ENCODE measurements at regions of chr7 and their contacts with region 1.

Region 1: GRCh38 chr7:90455163-90456030 is 14.0 kb upstream of the PTTG1IP2 start:
- DNase-seq: peak; percentile 57
- ATAC-seq: peak; percentile 89
- H3K4me3 ChIP-seq: peak overlapping the region; percentile 23; the same call in 1 of the 2 replicates
- H3K27ac ChIP-seq: no peak overlapping the region
- H3K4me1 ChIP-seq: no peaks in the 10 kb centered on the region
- H3K27me3 ChIP-seq: no peaks in the 10 kb centered on the region
- CTCF ChIP-seq: peak; percentile 70
- POLR2A ChIP-seq: no peak
- RAD21 ChIP-seq: peak; percentile 72

Region 2: GRCh38 chr7:90552521-90552920 is 97.1 kb after region 1 on chr7:
- CTCF ChIA-PET with region 1: no interaction called
- POLR2A ChIA-PET with region 1: no interaction called
- dilution Hi-C with region 1: no loop called
- in situ Hi-C with region 1: no loop called
- intact Hi-C with region 1: no loop called
- DNase-seq: peak; percentile 35
- ATAC-seq: 0 out of 2 replicates have a peak, but pooled peaks have one; percentile 59
- H3K4me3 ChIP-seq: no peak overlapping the region
- H3K27ac ChIP-seq: no peak overlapping the region
- H3K4me1 ChIP-seq: peaks cover 2% of the 10 kb centered on the region; the same call in 1 of the 2 replicates
- H3K27me3 ChIP-seq: peaks cover 4% of the 10 kb centered on the region; the same call in 1 of the 2 replicates
- CTCF ChIP-seq: peak; percentile 42
- POLR2A ChIP-seq: no peak
- RAD21 ChIP-seq: peak; percentile 46

Region 3: DNA sequence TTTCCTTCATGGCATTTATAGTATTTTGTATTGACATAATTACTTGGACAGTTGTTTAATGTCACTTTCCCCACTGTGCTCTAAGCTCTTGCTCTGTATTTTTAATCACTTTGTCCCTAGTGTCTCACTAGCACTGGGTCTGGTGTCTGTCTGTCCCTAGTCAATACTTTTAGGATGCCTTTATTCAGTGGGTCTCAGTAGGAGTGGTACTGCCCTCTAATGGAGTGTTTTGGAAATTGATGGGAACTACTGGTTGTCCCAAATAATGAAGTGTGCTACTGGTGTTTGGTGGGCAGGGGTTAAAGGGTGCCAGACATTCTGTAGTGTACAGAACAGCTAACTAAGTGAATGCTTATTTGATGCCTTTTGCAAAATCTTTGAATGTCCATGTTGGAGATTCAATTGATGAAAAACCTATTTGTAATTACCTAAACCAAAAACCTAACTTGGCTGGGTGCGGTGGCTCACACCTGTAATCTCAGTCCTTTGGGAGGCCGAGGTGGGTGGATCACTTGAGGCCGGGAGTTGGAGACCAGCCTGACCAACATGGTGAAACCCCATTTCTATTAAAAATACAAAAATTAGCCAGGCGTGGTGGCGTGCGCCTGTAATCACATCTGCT is 174.0 kb after region 1 on chr7:
- CTCF ChIA-PET with region 1: no interaction called
- POLR2A ChIA-PET with region 1: no interaction called
- dilution Hi-C with region 1: no loop called
- in situ Hi-C with region 1: no loop called
- intact Hi-C with region 1: loop called (anchors 2 kb)
- DNase-seq: peak; percentile 63
- ATAC-seq: peak; percentile 73
- H3K4me3 ChIP-seq: no peak overlapping the region
- H3K27ac ChIP-seq: no peak overlapping the region
- H3K4me1 ChIP-seq: peaks cover 8% of the 10 kb centered on the region
- H3K27me3 ChIP-seq: no peaks in the 10 kb centered on the region
- CTCF ChIP-seq: peak; percentile 68
- POLR2A ChIP-seq: no peak
- RAD21 ChIP-seq: peak; percentile 76

Region 4: GRCh38 chr7:90766814-90767564 is 311.6 kb after region 1 on chr7:
- CTCF ChIA-PET with region 1: no interaction called
- POLR2A ChIA-PET with region 1: no interaction called
- dilution Hi-C with region 1: no loop called
- in situ Hi-C with region 1: no loop called
- intact Hi-C with region 1: loop called (anchors 10 kb)
- DNase-seq: peak; percentile 82
- ATAC-seq: peak; percentile 95
- H3K4me3 ChIP-seq: no peak overlapping the region
- H3K27ac ChIP-seq: peak overlapping the region; percentile 12; the same call in 1 of the 2 replicates
- H3K4me1 ChIP-seq: peaks cover 3% of the 10 kb centered on the region; the same call in 1 of the 2 replicates
- H3K27me3 ChIP-seq: no peaks in the 10 kb centered on the region
- CTCF ChIP-seq: no peak
- POLR2A ChIP-seq: no peak
- RAD21 ChIP-seq: no peak

Region 5: GRCh38 chr7:91020636-91021385 is 565.4 kb after region 1 on chr7:
- CTCF ChIA-PET with region 1: no interaction called
- POLR2A ChIA-PET with region 1: no interaction called
- dilution Hi-C with region 1: no loop called
- in situ Hi-C with region 1: loop called (anchors 10 kb)
- intact Hi-C with region 1: no loop called
- DNase-seq: no peak
- ATAC-seq: no peak
- H3K4me3 ChIP-seq: no peak overlapping the region
- H3K27ac ChIP-seq: no peak overlapping the region
- H3K4me1 ChIP-seq: no peaks in the 10 kb centered on the region
- H3K27me3 ChIP-seq: no peaks in the 10 kb centered on the region
- CTCF ChIP-seq: no peak
- POLR2A ChIP-seq: no peak
- RAD21 ChIP-seq: no peak

Measured in IMR-90 (cell line).